ENCODE measurements at regions of chr2 and their contacts with region 1.

Region 1: DNA sequence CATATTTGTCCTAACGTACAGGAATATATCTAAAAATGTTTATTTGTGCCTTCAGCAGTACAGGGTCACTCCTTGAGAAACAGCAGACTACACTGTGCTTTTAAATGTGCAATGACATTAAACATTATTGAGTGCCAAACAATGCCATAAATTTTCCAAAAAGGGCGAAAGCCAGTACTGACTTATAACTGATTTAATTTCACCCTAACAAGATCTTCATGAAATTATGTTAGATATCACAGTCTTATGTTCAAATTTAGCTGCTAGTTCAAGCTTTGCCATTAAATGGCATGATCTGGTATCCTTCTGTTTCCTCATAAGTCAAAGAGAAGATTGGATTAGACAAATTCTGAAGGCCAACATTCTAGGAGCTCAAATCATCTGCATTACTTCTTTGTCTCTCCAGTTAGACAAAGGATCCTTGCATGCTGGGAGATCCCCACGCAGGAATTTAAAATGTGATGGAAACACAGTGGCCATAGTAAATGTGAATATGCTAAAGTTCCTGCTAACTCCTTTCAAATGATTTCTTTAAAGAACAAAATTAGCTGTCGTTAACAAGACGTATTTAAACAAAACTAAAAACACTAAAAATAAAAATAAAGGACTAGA is 129.3 kb upstream of the STON1 start:
- DNase-seq: no peak
- H3K4me3 ChIP-seq: no peak overlapping the region
- H3K4me3 Mint-ChIP-seq: no peak overlapping the region
- H3K27ac ChIP-seq: no peak overlapping the region
- H3K27ac Mint-ChIP-seq: no peak overlapping the region
- H3K4me1 ChIP-seq: peaks cover 7% of the 10 kb centered on the region
- H3K4me1 Mint-ChIP-seq: peaks cover 3 to 6% (median 4%) of the 10 kb centered on the region in 4 donors
- H3K27me3 ChIP-seq: no peaks in the 10 kb centered on the region
- H3K27me3 Mint-ChIP-seq: peaks cover 1 to 3% of the 10 kb centered on the region in 2 donors

Region 2: DNA sequence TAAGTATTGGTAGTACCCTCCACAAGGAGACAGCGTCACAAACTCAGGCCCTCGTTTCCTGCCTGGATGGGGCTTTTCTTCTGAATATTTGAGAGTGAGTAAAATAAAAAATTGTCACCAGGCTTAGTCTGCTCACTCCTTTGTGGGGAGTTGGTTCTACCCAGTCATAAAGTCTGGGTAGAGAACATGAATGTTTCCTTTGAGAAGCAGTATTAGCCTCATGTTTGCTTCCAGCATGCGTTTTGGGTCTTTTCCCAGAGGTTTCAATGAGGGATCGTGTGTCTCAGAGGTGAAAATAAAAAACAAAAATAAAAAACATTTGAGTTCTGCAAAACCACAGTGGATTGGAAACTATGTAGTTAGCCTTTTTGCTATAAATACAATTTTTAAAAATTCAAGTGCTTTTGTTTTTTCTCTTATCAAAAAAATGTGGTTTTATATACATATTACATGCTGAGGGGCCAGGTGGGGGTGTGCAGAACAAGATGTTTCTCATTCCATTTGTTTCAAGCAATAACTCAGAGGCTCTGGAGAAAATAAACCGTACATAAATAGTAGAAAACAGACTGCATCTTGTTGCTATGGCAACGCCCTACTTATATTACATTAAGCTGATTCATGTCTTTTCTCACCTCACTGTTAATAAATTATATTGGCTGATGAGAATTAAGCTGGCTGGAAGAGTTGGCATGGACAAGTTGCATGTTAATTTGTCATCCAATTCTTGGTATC is 269.0 kb before region 1 on chr2:
- CTCF ChIA-PET with region 1: no interaction called
- POLR2A ChIA-PET with region 1: no interaction called
- intact Hi-C with region 1: no loop called
- DNase-seq: peak; percentile 21 to 63 (median 40)
- H3K4me3 ChIP-seq: no peak overlapping the region
- H3K4me3 Mint-ChIP-seq: peak overlapping the region in 1 of 8 donors; percentile 7
- H3K27ac ChIP-seq: no peak overlapping the region
- H3K27ac Mint-ChIP-seq: peak overlapping the region in 6 of 7 donors; percentile 7 to 74 (median 64)
- H3K4me1 ChIP-seq: peaks cover 16% of the 10 kb centered on the region
- H3K4me1 Mint-ChIP-seq: peaks cover 10 to 13% (median 11%) of the 10 kb centered on the region in 4 donors
- H3K27me3 ChIP-seq: no peaks in the 10 kb centered on the region
- H3K27me3 Mint-ChIP-seq: no peaks in the 10 kb centered on the region

Region 3: GRCh38 chr2:48343571-48344440 is 56.9 kb before region 1 on chr2:
- CTCF ChIA-PET with region 1: no interaction called
- POLR2A ChIA-PET with region 1: no interaction called
- intact Hi-C with region 1: no loop called
- DNase-seq: peak; percentile 47 to 80 (median 62)
- H3K4me3 ChIP-seq: peak overlapping the region; percentile 13 to 26
- H3K4me3 Mint-ChIP-seq: peak overlapping the region; percentile 55 to 90 (median 78)
- H3K27ac ChIP-seq: peak overlapping the region; percentile 56
- H3K27ac Mint-ChIP-seq: peak overlapping the region; percentile 69 to 93 (median 84)
- H3K4me1 ChIP-seq: peaks cover 73% of the 10 kb centered on the region
- H3K4me1 Mint-ChIP-seq: peaks cover 28 to 54% (median 43%) of the 10 kb centered on the region in 4 donors
- H3K27me3 ChIP-seq: no peaks in the 10 kb centered on the region
- H3K27me3 Mint-ChIP-seq: no peaks in the 10 kb centered on the region

Region 4: GRCh38 chr2:48383046-48383445 is 17.6 kb before region 1 on chr2:
- CTCF ChIA-PET with region 1: no interaction called
- POLR2A ChIA-PET with region 1: no interaction called
- intact Hi-C with region 1: loop called (anchors 2 kb)
- DNase-seq: no peak
- H3K4me3 ChIP-seq: no peak overlapping the region
- H3K4me3 Mint-ChIP-seq: no peak overlapping the region
- H3K27ac ChIP-seq: no peak overlapping the region
- H3K27ac Mint-ChIP-seq: no peak overlapping the region
- H3K4me1 ChIP-seq: no peaks in the 10 kb centered on the region
- H3K4me1 Mint-ChIP-seq: peaks cover 0 to 5% (median 0%) of the 10 kb centered on the region in 4 donors
- H3K27me3 ChIP-seq: no peaks in the 10 kb centered on the region
- H3K27me3 Mint-ChIP-seq: no peaks in the 10 kb centered on the region

Measured in CD4-positive, alpha-beta memory T cell (primary cell).